Activated CD4-positive, alpha-beta T cell treated with anti-CD3 and anti-CD28 coated beads for 36 hours (primary cell): ENCODE measurements at regions of chr7 and their contacts with region 1.

Region 1: DNA sequence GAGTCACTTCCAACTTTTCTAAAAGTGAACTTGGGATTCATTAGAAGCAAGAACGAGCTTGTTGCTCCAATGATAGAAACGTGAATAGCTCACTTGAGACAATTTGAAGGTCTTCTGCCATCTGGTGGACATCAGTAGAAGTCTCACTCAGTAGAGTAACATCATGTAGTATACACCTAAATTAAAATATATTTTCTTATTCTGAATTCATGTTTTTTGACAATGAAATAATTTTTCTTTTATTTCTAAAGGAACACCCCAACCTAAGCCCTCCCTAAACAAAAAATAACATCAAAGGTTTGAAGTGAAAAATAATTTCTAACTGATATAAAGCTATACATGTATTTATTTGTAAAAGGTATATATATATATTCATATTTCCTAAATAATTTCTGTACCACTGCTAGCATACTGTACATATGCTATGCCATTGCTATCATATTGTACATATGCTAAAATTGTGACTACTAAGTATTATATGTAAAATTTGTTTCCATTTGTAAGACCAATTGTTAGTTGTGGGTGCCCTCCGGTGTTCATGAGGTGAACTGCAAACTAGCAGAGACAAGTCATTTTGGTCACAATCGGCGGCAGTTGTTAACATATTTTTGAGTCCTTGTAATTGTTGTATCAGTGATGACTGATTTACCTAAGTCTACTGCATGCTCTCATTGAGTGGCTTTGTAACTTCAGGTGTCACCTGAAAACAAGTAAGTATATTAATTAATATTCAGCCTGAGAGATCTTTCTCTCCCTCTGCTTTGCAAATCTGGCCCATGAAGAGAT is 121.9 kb downstream of the PTPRZ1 start:
- DNase-seq: peak; percentile 65
- ATAC-seq: peak; percentile 70
- H3K4me3 Mint-ChIP-seq: no peak overlapping the region
- H3K27ac Mint-ChIP-seq: no peak overlapping the region
- H3K4me1 Mint-ChIP-seq: no peaks in the 10 kb centered on the region
- H3K27me3 Mint-ChIP-seq: no peaks in the 10 kb centered on the region

Region 2: GRCh38 chr7:120987683-120988590 is 1006.9 kb before region 1 on chr7:
- CTCF ChIA-PET with region 1: no interaction called
- POLR2A ChIA-PET with region 1: no interaction called
- intact Hi-C with region 1: loop called in 1 of 2 experiments (anchors 10 kb)
- DNase-seq: peak; percentile 91
- ATAC-seq: peak; percentile 99
- H3K4me3 Mint-ChIP-seq: peak overlapping the region; percentile 53
- H3K27ac Mint-ChIP-seq: no peak overlapping the region
- H3K4me1 Mint-ChIP-seq: peaks cover 17% of the 10 kb centered on the region
- H3K27me3 Mint-ChIP-seq: peaks cover 38% of the 10 kb centered on the region

Region 3: GRCh38 chr7:121126801-121127534 is 867.9 kb before region 1 on chr7:
- CTCF ChIA-PET with region 1: no interaction called
- POLR2A ChIA-PET with region 1: no interaction called
- intact Hi-C with region 1: loop called in 1 of 2 experiments (anchors 5 kb)
- DNase-seq: no peak
- ATAC-seq: no peak
- H3K4me3 Mint-ChIP-seq: no peak overlapping the region
- H3K27ac Mint-ChIP-seq: no peak overlapping the region
- H3K4me1 Mint-ChIP-seq: no peaks in the 10 kb centered on the region
- H3K27me3 Mint-ChIP-seq: peaks cover 11% of the 10 kb centered on the region

Region 4: GRCh38 chr7:121366852-121367431 is 627.9 kb before region 1 on chr7:
- CTCF ChIA-PET with region 1: interaction called, 18 read pairs
- POLR2A ChIA-PET with region 1: no interaction called
- intact Hi-C with region 1: loop called (anchors 1 to 2 kb)
- DNase-seq: peak; percentile 31
- ATAC-seq: no peak
- H3K4me3 Mint-ChIP-seq: no peak overlapping the region
- H3K27ac Mint-ChIP-seq: no peak overlapping the region
- H3K4me1 Mint-ChIP-seq: peaks cover 10% of the 10 kb centered on the region
- H3K27me3 Mint-ChIP-seq: no peaks in the 10 kb centered on the region

Region 5: GRCh38 chr7:121563177-121563576 is 431.6 kb before region 1 on chr7:
- CTCF ChIA-PET with region 1: interaction called, 4 read pairs
- POLR2A ChIA-PET with region 1: no interaction called
- intact Hi-C with region 1: loop called in 1 of 2 experiments (anchors 10 kb)
- DNase-seq: no peak
- ATAC-seq: no peak
- H3K4me3 Mint-ChIP-seq: no peak overlapping the region
- H3K27ac Mint-ChIP-seq: no peak overlapping the region
- H3K4me1 Mint-ChIP-seq: no peaks in the 10 kb centered on the region
- H3K27me3 Mint-ChIP-seq: peaks cover 2% of the 10 kb centered on the region

Region 6: DNA sequence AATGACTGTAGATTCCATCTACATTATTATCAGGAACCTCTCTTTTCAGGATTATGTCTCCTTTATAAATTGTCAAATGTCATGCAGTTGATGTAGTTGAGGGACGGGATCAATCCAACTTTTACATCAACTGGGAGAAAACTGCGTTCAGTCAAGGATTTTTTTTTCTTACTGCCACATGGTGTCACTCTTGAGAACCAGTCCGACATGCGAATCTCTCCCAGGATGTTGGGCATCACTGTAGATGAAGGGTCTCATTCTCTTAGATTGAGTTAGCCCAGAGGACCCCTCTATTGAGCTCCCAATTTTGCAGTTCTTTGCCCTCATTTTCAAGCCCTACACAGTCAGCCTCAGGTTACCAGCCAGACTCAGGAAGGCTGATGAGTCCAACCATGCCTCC is 242.1 kb before region 1 on chr7:
- CTCF ChIA-PET with region 1: interaction called, 9 read pairs
- POLR2A ChIA-PET with region 1: no interaction called
- intact Hi-C with region 1: loop called (anchors 2 to 5 kb)
- DNase-seq: no peak
- ATAC-seq: no peak
- H3K4me3 Mint-ChIP-seq: no peak overlapping the region
- H3K27ac Mint-ChIP-seq: no peak overlapping the region
- H3K4me1 Mint-ChIP-seq: no peaks in the 10 kb centered on the region
- H3K27me3 Mint-ChIP-seq: no peaks in the 10 kb centered on the region

Region 7: DNA sequence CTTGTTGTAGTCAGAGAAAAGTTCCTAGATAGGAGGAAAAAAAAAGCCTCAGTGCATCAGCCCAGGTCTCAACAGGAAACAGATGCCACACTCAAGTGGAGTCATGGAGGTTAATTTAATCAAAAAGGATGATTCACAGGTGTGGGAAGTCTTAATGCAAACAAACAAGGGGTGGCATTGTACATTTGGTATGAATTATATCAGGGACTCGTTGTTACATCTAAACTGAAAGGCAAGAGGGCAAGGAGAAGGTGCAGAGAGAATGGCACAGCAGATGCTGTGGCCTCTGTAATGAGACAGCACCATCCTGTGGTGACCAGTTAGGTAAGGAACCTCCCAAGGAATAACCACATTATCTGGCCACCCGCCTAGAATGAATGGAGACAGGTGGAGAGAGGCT is 11.9 kb after region 1 on chr7:
- CTCF ChIA-PET with region 1: interaction called, 10 read pairs
- POLR2A ChIA-PET with region 1: no interaction called
- intact Hi-C with region 1: no loop called
- DNase-seq: no peak
- ATAC-seq: no peak
- H3K4me3 Mint-ChIP-seq: no peak overlapping the region
- H3K27ac Mint-ChIP-seq: no peak overlapping the region
- H3K4me1 Mint-ChIP-seq: no peaks in the 10 kb centered on the region
- H3K27me3 Mint-ChIP-seq: no peaks in the 10 kb centered on the region

Region 8: GRCh38 chr7:122100021-122100420 is 105.2 kb after region 1 on chr7:
- CTCF ChIA-PET with region 1: no interaction called
- POLR2A ChIA-PET with region 1: no interaction called
- intact Hi-C with region 1: no loop called
- DNase-seq: no peak
- ATAC-seq: no peak
- H3K4me3 Mint-ChIP-seq: no peak overlapping the region
- H3K27ac Mint-ChIP-seq: no peak overlapping the region
- H3K4me1 Mint-ChIP-seq: no peaks in the 10 kb centered on the region
- H3K27me3 Mint-ChIP-seq: no peaks in the 10 kb centered on the region

Region 9: DNA sequence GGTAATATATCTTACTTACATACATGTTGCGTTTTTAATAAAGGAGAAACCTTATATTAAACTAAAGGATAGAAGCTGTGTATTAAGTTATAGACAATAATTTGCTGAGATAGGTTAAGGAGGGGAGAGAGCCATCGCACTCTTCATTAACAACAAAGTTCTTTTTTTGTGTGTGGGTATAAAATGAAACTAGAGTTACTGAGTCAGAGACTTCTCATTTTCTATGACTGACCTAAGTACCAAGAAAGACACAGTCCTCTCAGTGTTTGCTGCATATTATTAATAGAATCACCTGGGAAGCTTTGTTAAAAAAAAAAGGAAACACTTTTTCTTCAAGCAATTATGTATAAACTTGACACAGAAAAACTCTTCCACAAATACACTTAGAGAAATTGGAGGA is 278.3 kb after region 1 on chr7:
- CTCF ChIA-PET with region 1: no interaction called
- POLR2A ChIA-PET with region 1: no interaction called
- intact Hi-C with region 1: no loop called
- DNase-seq: no peak
- ATAC-seq: no peak
- H3K4me3 Mint-ChIP-seq: no peak overlapping the region
- H3K27ac Mint-ChIP-seq: no peak overlapping the region
- H3K4me1 Mint-ChIP-seq: no peaks in the 10 kb centered on the region
- H3K27me3 Mint-ChIP-seq: no peaks in the 10 kb centered on the region